K562 (cell line): ENCODE measurements at regions of chr2 and their contacts with region 1.

Region 1: GRCh38 chr2:190947711-190948251 is 66.2 kb downstream of the STAT1 start:
- DNase-seq: no peak
- ATAC-seq: peak; percentile 43; the same call in 2 of the 3 replicates
- H3K4me3 ChIP-seq: no peak overlapping the region
- H3K27ac ChIP-seq: no peak overlapping the region
- H3K4me1 ChIP-seq: peaks cover 0 to 10% of the 10 kb centered on the region in 2 experiments; a peak in 1 of 5 replicates
- H3K27me3 ChIP-seq: no peaks in the 10 kb centered on the region
- CTCF ChIP-seq: no peak
- EP300 ChIP-seq: no peak
- POLR2A ChIP-seq: no peak
- RAD21 ChIP-seq: no peak

Region 2: GRCh38 chr2:190781604-190782198 is 166.1 kb before region 1 on chr2:
- CTCF ChIA-PET with region 1: no interaction called
- POLR2A ChIA-PET with region 1: no interaction called
- in situ Hi-C with region 1: no loop called
- intact Hi-C with region 1: loop called (anchors 5 kb)
- DNase-seq: peak; percentile 52 to 63 (median 56)
- ATAC-seq: peak; percentile 87
- H3K4me3 ChIP-seq: no peak overlapping the region
- H3K27ac ChIP-seq: no peak overlapping the region
- H3K4me1 ChIP-seq: no peaks in the 10 kb centered on the region; a peak in 1 of 5 replicates
- H3K27me3 ChIP-seq: no peaks in the 10 kb centered on the region
- CTCF ChIP-seq: peak; percentile 34 to 71 (median 52); a peak in 5 of 6 replicates
- EP300 ChIP-seq: no peak
- POLR2A ChIP-seq: no peak
- RAD21 ChIP-seq: peak; percentile 64 to 79

Region 3: GRCh38 chr2:190843874-190844699 is 103.7 kb before region 1 on chr2:
- CTCF ChIA-PET with region 1: no interaction called
- POLR2A ChIA-PET with region 1: no interaction called
- in situ Hi-C with region 1: no loop called
- intact Hi-C with region 1: loop called (anchors 10 kb)
- DNase-seq: no peak
- ATAC-seq: no peak
- H3K4me3 ChIP-seq: no peak overlapping the region
- H3K27ac ChIP-seq: no peak overlapping the region
- H3K4me1 ChIP-seq: no peaks in the 10 kb centered on the region
- H3K27me3 ChIP-seq: no peaks in the 10 kb centered on the region; a peak in 2 of 5 replicates
- CTCF ChIP-seq: no peak
- EP300 ChIP-seq: no peak
- POLR2A ChIP-seq: no peak
- RAD21 ChIP-seq: no peak